ENCODE measurements at regions of chr10 and their contacts with region 1.

Region 1: DNA sequence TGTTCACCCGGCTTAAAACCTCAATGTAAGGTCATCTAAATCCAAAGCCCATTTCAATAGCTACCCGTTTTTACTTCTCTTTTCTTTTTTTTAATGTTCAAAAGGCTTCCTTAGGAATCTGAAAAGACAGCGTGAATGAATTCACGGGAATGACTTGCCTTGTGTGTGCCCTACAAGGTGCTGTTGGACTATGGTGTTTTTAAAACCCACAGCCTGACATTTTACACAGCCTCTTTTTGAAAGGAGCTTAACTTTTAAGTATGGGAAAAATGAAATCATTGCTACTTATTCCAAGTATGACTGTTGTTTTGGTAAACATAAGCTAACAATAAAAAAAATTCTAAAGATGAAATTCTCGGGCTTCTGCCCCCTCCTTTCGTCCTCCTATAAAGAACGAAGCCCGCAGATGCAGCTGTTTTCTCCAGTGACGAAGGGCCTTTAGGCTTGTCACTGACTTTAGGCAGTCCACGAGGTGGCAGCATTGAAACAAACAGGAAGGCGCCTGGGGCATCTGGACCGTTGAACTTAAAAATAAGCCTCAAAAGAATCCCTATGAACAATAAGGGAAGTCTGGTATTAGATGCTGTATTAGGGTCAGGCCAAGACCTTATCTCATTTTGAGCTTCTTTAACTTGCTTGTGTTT is 141.3 kb downstream of the NRP1 start:
- DNase-seq: peak; percentile 64 to 70 (median 65)
- H3K4me3 ChIP-seq: no peak overlapping the region
- H3K4me3 Mint-ChIP-seq: peak overlapping the region in 1 of 8 donors; percentile 43
- H3K27ac ChIP-seq: no peak overlapping the region
- H3K27ac Mint-ChIP-seq: peak overlapping the region in 1 of 7 donors; percentile 7
- H3K4me1 ChIP-seq: peaks cover 6% of the 10 kb centered on the region
- H3K4me1 Mint-ChIP-seq: peaks cover 0 to 2% (median 0%) of the 10 kb centered on the region in 4 donors
- H3K27me3 ChIP-seq: no peaks in the 10 kb centered on the region
- H3K27me3 Mint-ChIP-seq: peaks cover 0 to 3% of the 10 kb centered on the region in 2 donors

Region 2: DNA sequence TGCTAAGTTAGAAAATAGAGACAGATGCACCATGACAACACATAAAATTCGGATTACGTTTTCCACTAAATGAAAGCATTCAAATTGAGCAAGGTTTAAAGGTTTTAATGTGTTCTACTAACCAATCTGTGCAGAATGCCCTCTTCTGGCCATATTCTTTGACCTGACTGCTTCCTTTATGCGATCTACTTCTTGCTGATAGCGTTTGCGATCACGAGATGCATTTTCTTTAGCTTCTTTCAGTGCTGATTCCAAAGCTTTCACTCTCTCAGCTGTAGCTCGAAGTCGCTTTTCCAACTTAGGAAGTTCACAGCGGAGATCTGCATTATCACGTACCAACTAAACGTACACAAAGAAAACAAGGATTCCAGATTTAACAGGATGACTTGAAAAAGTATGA is 1176.2 kb before region 1 on chr10:
- CTCF ChIA-PET with region 1: no interaction called
- POLR2A ChIA-PET with region 1: no interaction called
- intact Hi-C with region 1: no loop called
- DNase-seq: no peak
- H3K4me3 ChIP-seq: no peak overlapping the region
- H3K4me3 Mint-ChIP-seq: no peak overlapping the region
- H3K27ac ChIP-seq: no peak overlapping the region
- H3K27ac Mint-ChIP-seq: peak overlapping the region in 1 of 7 donors; percentile 45
- H3K4me1 ChIP-seq: no peaks in the 10 kb centered on the region
- H3K4me1 Mint-ChIP-seq: peaks cover 0 to 6% (median 1%) of the 10 kb centered on the region in 4 donors
- H3K27me3 ChIP-seq: no peaks in the 10 kb centered on the region
- H3K27me3 Mint-ChIP-seq: no peaks in the 10 kb centered on the region

Region 3: DNA sequence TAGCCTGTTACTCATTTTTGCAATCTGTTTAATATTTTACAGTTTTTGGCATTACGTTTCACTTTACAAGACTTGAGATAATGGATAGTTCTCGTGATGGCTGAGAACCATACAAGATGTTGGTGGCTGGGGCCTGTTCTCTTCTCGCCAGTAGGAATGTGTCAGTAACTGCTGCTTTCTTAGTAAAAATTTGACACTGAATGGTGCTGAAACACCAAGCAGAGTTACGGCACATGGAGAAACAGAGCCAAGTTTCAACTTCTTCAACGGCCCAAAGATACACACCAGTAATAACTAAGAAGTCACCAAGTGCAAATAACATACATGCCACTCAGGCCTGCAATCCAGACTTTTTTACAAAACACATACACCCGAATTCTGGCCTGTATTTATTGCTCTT is 10.9 kb after region 1 on chr10:
- CTCF ChIA-PET with region 1: interaction called, 22 read pairs
- POLR2A ChIA-PET with region 1: no interaction called
- intact Hi-C with region 1: no loop called
- DNase-seq: no peak
- H3K4me3 ChIP-seq: no peak overlapping the region
- H3K4me3 Mint-ChIP-seq: no peak overlapping the region
- H3K27ac ChIP-seq: no peak overlapping the region
- H3K27ac Mint-ChIP-seq: no peak overlapping the region
- H3K4me1 ChIP-seq: no peaks in the 10 kb centered on the region
- H3K4me1 Mint-ChIP-seq: no peaks in the 10 kb centered on the region
- H3K27me3 ChIP-seq: no peaks in the 10 kb centered on the region
- H3K27me3 Mint-ChIP-seq: peaks cover 0 to 2% of the 10 kb centered on the region in 2 donors

Region 4: GRCh38 chr10:33223326-33224000 is 30.3 kb after region 1 on chr10:
- CTCF ChIA-PET with region 1: interaction called, 11 read pairs
- POLR2A ChIA-PET with region 1: no interaction called
- intact Hi-C with region 1: no loop called
- DNase-seq: no peak
- H3K4me3 ChIP-seq: no peak overlapping the region
- H3K4me3 Mint-ChIP-seq: no peak overlapping the region
- H3K27ac ChIP-seq: no peak overlapping the region
- H3K27ac Mint-ChIP-seq: no peak overlapping the region
- H3K4me1 ChIP-seq: no peaks in the 10 kb centered on the region
- H3K4me1 Mint-ChIP-seq: no peaks in the 10 kb centered on the region
- H3K27me3 ChIP-seq: no peaks in the 10 kb centered on the region
- H3K27me3 Mint-ChIP-seq: peaks cover 1 to 4% of the 10 kb centered on the region in 2 donors

Region 5: DNA sequence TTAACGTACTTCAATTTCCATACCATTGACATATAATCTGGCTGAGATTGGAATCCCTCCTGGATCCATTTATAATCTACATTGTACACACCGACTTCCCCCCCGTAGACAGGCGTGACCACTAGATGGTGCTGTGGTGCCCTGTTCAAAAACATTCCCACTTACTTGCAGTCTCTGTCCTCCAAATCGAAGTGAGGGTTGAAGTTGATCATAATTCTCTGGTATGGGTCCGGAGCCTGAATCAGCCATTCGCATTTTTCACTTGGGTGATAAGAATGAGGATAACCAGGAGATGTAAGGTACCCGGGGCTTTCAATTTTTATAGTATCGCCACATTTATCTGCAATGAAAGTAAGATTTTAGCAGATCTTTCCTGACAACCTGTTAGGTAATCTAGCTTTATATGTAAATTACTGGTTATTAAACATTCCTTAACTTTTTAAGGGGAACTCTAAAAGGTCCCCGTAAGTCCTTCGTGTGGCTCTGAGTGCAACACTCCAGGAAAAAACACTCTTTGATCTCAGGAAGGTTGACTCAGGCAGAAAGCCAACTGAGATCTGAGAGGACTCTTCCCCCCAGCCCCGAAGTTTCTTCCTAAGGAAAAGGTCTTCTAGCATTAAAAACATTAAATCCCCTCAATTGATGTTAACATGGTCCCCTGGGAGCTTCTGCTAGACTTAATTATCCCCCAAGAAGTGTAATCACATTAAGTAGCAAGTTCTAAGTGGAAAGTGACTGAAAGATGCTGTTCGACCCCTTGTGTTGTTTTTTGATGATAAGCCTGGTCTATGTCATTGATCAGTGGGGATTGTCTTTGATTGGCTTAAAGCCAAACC is 137.6 kb after region 1 on chr10:
- CTCF ChIA-PET with region 1: interaction called, 36 read pairs
- POLR2A ChIA-PET with region 1: interaction called, 3 read pairs
- intact Hi-C with region 1: loop called (anchors 1 kb)
- DNase-seq: peak; percentile 49 to 67 (median 64)
- H3K4me3 ChIP-seq: no peak overlapping the region
- H3K4me3 Mint-ChIP-seq: peak overlapping the region in 4 of 8 donors; percentile 55 to 59 (median 56)
- H3K27ac ChIP-seq: no peak overlapping the region
- H3K27ac Mint-ChIP-seq: no peak overlapping the region
- H3K4me1 ChIP-seq: peaks cover 15% of the 10 kb centered on the region
- H3K4me1 Mint-ChIP-seq: peaks cover 9 to 27% (median 16%) of the 10 kb centered on the region in 4 donors
- H3K27me3 ChIP-seq: peaks cover 13% of the 10 kb centered on the region
- H3K27me3 Mint-ChIP-seq: peaks cover 50% of the 10 kb centered on the region in 2 donors

Region 6: DNA sequence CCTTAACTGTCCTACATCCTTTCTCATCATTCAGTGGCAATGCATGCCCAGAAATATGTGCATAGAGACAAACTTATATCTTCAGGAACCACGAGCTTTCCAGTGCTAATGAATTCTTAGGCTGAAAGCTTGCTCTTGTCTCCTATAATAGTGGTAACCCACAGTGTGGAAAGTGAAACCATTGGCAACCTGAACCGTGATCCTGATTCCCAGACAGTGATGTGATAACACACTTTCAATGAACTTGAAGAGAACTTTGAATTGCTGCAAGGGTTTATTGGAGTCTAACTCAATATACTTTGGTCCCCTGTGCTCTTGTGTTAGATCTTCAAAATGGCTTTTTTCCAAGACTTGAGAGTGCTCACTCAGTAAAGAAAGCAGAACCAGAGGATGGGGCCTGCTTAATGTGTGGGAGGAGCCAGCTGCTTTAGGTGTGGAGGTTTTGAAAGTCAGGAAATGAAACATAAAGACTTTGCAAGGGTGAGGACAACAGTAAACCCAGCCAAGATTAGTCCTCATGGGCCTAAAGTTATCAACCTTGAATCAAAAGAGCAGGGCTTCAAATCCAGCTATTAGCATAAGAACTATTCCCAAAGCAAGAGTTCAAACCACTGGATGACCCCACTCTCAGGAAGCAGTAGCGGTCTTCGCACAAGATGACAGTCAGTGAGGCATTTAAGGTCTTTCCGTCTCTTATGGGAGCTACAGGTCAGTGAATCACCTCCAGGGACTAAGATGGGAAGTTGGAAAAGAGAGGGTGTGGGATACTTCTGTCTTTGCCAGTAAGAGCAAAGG is 473.7 kb after region 1 on chr10:
- CTCF ChIA-PET with region 1: interaction called, 3 read pairs
- POLR2A ChIA-PET with region 1: no interaction called
- intact Hi-C with region 1: loop called (anchors 5 kb)
- DNase-seq: no peak
- H3K4me3 ChIP-seq: no peak overlapping the region
- H3K4me3 Mint-ChIP-seq: peak overlapping the region in 2 of 8 donors; percentile 14 to 30
- H3K27ac ChIP-seq: no peak overlapping the region
- H3K27ac Mint-ChIP-seq: no peak overlapping the region
- H3K4me1 ChIP-seq: no peaks in the 10 kb centered on the region
- H3K4me1 Mint-ChIP-seq: peaks cover 4 to 22% (median 11%) of the 10 kb centered on the region in 4 donors
- H3K27me3 ChIP-seq: no peaks in the 10 kb centered on the region
- H3K27me3 Mint-ChIP-seq: peaks cover 2 to 4% of the 10 kb centered on the region in 2 donors